PC-9 (cell line): ENCODE measurements at regions of chr13 and their contacts with region 1.

Region 1: DNA sequence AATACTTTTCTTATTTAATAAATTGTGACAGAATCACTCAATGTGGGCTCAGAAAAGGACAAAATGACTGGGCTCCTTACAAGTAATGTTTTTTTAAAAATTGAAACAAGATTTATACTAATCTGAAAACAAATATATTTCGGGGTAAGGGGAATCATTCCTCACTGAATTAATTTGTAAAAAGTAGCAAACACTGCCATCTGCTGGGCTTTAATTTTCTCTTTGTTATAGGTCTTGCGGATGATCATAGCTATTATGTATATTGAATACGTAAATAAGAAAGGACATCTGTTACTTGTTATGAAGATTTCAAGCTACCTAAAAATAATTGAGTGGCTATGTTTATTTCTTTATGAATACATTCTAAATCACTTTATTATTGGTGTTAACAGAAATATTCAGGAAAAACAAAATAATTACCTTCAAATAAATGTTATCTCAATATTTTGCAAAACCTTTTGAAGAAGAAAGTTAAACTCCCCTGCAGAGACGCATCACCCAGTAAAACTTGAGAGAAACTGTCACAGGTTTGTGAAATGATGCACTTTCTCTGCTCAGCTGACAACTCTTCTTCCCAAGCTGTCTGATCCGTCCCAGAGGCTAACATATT is 17.8 kb upstream of the ENOX1 start:
- DNase-seq: peak; percentile 12 to 45
- H3K4me3 ChIP-seq: no peak overlapping the region
- H3K27ac ChIP-seq: peak overlapping the region; percentile 67
- H3K4me1 ChIP-seq: peaks cover 25% of the 10 kb centered on the region
- H3K27me3 ChIP-seq: no peaks in the 10 kb centered on the region
- CTCF ChIP-seq: peak; percentile 72

Region 2: GRCh38 chr13:42594970-42595571 is 1209.5 kb before region 1 on chr13:
- CTCF ChIA-PET with region 1: no interaction called
- POLR2A ChIA-PET with region 1: no interaction called
- intact Hi-C with region 1: loop called (anchors 10 kb)
- DNase-seq: peak in 1 of 2 experiments; percentile 33
- H3K4me3 ChIP-seq: no peak overlapping the region
- H3K27ac ChIP-seq: no peak overlapping the region
- H3K4me1 ChIP-seq: peaks cover 10% of the 10 kb centered on the region
- H3K27me3 ChIP-seq: no peaks in the 10 kb centered on the region
- CTCF ChIP-seq: peak; percentile 83

Region 3: GRCh38 chr13:43085545-43085944 is 719.0 kb before region 1 on chr13:
- CTCF ChIA-PET with region 1: no interaction called
- POLR2A ChIA-PET with region 1: no interaction called
- intact Hi-C with region 1: loop called (anchors 2 kb)
- DNase-seq: no peak
- H3K4me3 ChIP-seq: no peak overlapping the region
- H3K27ac ChIP-seq: no peak overlapping the region
- H3K4me1 ChIP-seq: no peaks in the 10 kb centered on the region
- H3K27me3 ChIP-seq: no peaks in the 10 kb centered on the region
- CTCF ChIP-seq: peak; percentile 75

Region 4: GRCh38 chr13:43303033-43303729 is 501.4 kb before region 1 on chr13:
- CTCF ChIA-PET with region 1: no interaction called
- POLR2A ChIA-PET with region 1: no interaction called
- intact Hi-C with region 1: loop called (anchors 2 kb)
- DNase-seq: peak in 1 of 2 experiments; percentile 39
- H3K4me3 ChIP-seq: no peak overlapping the region
- H3K27ac ChIP-seq: no peak overlapping the region
- H3K4me1 ChIP-seq: no peaks in the 10 kb centered on the region
- H3K27me3 ChIP-seq: no peaks in the 10 kb centered on the region
- CTCF ChIP-seq: peak; percentile 53; the same call in 1 of the 2 replicates

Region 5: GRCh38 chr13:44280456-44280855 is 475.9 kb after region 1 on chr13:
- CTCF ChIA-PET with region 1: no interaction called
- POLR2A ChIA-PET with region 1: no interaction called
- intact Hi-C with region 1: no loop called
- DNase-seq: no peak
- H3K4me3 ChIP-seq: no peak overlapping the region
- H3K27ac ChIP-seq: no peak overlapping the region
- H3K4me1 ChIP-seq: no peaks in the 10 kb centered on the region
- H3K27me3 ChIP-seq: no peaks in the 10 kb centered on the region
- CTCF ChIP-seq: no peak

Region 6: DNA sequence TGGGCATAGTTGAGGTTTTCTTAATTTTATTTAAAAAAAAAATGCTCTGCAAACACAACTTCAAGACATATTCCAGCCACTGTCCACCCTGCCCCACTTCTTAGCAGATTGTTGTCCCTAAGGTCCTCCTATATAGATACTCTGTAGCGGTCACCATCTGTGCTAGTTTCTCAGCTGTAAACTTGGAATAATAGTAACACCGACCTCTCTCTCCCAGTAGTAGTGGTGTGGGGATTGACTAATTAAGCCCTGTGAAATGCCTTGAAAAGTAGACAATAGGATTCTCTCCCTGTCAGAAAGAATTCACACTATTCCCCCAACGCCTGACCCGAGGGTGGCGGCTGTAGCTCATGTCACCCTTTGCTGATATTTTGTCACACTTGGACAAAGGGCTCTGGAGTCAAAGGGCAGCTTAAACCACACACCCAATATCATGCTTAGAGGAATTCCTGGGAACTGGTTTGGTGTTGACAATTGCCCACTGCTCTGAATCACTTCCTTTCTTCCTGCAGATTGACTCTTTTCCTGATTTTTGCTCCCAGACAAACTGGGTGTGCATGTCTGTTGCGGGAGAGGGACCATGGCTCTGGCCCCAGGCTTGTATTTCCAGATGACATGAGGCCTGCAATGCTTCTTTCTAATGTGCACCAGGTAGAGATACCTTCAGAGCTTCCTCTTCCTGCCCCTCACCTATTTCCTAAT is 559.9 kb after region 1 on chr13:
- CTCF ChIA-PET with region 1: no interaction called
- POLR2A ChIA-PET with region 1: no interaction called
- intact Hi-C with region 1: no loop called
- DNase-seq: peak; percentile 63 to 97
- H3K4me3 ChIP-seq: peak overlapping the region; percentile 36; the same call in 1 of the 2 replicates
- H3K27ac ChIP-seq: peak overlapping the region; percentile 96
- H3K4me1 ChIP-seq: peaks cover 86% of the 10 kb centered on the region
- H3K27me3 ChIP-seq: no peaks in the 10 kb centered on the region
- CTCF ChIP-seq: no peak